Upper lobe of right lung (tissue), 1 donor: ENCODE measurements at regions of chr17 and their contacts with region 1.

Region 1: DNA sequence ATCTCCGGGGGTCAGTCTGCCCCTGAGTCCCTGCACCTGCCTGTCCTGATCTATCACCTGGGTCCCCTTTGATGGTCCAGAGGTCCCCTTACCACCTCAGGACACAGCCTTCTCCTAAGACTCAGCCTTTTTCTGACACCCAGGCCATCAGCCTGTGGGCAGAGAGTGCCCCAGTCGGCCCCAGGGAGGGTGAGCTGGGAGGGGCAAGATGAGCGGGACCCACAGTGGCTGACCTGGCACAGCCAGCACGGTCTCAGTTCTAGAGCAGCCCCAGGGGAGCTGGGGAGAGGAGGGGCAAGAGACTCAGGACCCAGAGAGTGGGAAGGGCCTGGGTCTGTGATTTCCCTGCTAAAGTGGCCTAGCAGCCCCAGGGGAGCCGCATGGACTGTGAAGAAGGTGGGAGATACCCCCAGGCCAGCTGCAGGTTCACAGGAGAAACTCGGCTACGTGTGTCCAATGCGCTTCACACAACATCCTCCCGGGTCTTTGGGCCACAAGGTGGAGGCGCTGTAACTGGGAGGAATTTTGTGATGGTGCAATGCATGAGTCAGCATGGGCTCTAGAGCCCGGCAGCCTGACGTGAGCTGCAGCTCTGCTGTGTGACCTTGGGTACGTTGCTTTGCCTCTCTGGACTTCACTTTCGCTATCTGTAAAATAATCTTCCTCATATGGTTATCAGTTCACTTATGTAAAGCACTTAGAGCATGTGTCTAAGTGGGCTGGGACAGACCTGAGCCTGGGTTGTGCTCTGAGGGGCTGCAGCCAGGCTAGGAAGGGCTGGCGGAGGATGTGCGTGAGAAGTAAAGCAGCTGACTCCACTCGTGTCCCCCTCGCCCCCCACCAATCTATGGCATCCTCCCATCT is 67.2 kb upstream of the LHX1 start:
- DNase-seq: no peak
- ATAC-seq: no peak
- H3K4me3 ChIP-seq: no peak overlapping the region
- H3K27ac ChIP-seq: no peak overlapping the region
- H3K4me1 ChIP-seq: no peaks in the 10 kb centered on the region
- H3K27me3 ChIP-seq: peaks cover 5% of the 10 kb centered on the region
- CTCF ChIP-seq: no peak

Region 2: GRCh38 chr17:36921095-36921851 is 51.2 kb after region 1 on chr17:
- intact Hi-C with region 1: loop called (anchors 10 kb)
- DNase-seq: no peak
- ATAC-seq: peak; percentile 36
- H3K4me3 ChIP-seq: no peak overlapping the region
- H3K27ac ChIP-seq: no peak overlapping the region
- H3K4me1 ChIP-seq: no peaks in the 10 kb centered on the region
- H3K27me3 ChIP-seq: peaks cover 50% of the 10 kb centered on the region
- CTCF ChIP-seq: no peak